ENCODE measurements at regions of chr1 and their contacts with region 1.

Region 1: GRCh38 chr1:73452522-73452921 is 745.5 kb downstream of the LRRIQ3 start:
- DNase-seq: no peak
- H3K4me3 ChIP-seq: no peak overlapping the region
- H3K27ac ChIP-seq: no peak overlapping the region
- H3K4me1 ChIP-seq: no peaks in the 10 kb centered on the region
- H3K27me3 ChIP-seq: no peaks in the 10 kb centered on the region
- CTCF ChIP-seq: peak; percentile 48; the same call in 1 of the 2 replicates

Region 2: GRCh38 chr1:73556274-73556673 is 103.8 kb after region 1 on chr1:
- CTCF ChIA-PET with region 1: no interaction called
- POLR2A ChIA-PET with region 1: no interaction called
- intact Hi-C with region 1: no loop called
- DNase-seq: no peak
- H3K4me3 ChIP-seq: no peak overlapping the region
- H3K27ac ChIP-seq: no peak overlapping the region
- H3K4me1 ChIP-seq: no peaks in the 10 kb centered on the region
- H3K27me3 ChIP-seq: no peaks in the 10 kb centered on the region
- CTCF ChIP-seq: no peak

Region 3: DNA sequence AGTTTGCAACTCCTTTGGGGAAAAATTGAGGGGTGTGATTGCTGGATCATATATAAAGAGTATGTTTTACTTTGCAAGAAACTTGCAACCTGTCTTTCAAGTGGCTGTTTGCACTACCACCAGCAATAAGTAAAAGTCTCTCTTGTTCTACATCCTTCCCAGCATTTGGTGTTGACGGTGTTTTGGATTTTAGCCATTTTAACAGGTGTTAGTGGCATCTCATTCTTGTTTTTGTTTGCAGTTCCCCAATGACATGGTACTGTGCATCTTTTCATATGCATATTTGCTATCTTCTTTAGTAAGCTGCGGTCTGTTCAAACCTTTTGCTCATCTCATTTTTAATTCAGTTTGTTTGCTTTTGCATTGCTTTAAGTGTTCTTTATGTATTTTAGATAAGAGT is 210.0 kb after region 1 on chr1:
- CTCF ChIA-PET with region 1: no interaction called
- POLR2A ChIA-PET with region 1: no interaction called
- intact Hi-C with region 1: no loop called
- DNase-seq: no peak
- H3K4me3 ChIP-seq: no peak overlapping the region
- H3K27ac ChIP-seq: no peak overlapping the region
- H3K4me1 ChIP-seq: no peaks in the 10 kb centered on the region
- H3K27me3 ChIP-seq: no peaks in the 10 kb centered on the region
- CTCF ChIP-seq: no peak

Region 4: GRCh38 chr1:73674945-73675561 is 222.5 kb after region 1 on chr1:
- CTCF ChIA-PET with region 1: no interaction called
- POLR2A ChIA-PET with region 1: no interaction called
- intact Hi-C with region 1: loop called (anchors 5 kb)
- DNase-seq: no peak
- H3K4me3 ChIP-seq: no peak overlapping the region
- H3K27ac ChIP-seq: no peak overlapping the region
- H3K4me1 ChIP-seq: no peaks in the 10 kb centered on the region; the same call in 1 of the 2 replicates
- H3K27me3 ChIP-seq: no peaks in the 10 kb centered on the region
- CTCF ChIP-seq: peak; percentile 75

Measured in PC-9 (cell line).